PC-9 (cell line): ENCODE measurements at regions of chr2 and their contacts with region 1.

Region 1: GRCh38 chr2:58834404-58834803 is 593.3 kb upstream of the FANCL start:
- DNase-seq: peak in 1 of 2 experiments; percentile 17
- H3K4me3 ChIP-seq: no peak overlapping the region
- H3K27ac ChIP-seq: no peak overlapping the region
- H3K4me1 ChIP-seq: no peaks in the 10 kb centered on the region
- H3K27me3 ChIP-seq: no peaks in the 10 kb centered on the region
- CTCF ChIP-seq: no peak

Region 2: DNA sequence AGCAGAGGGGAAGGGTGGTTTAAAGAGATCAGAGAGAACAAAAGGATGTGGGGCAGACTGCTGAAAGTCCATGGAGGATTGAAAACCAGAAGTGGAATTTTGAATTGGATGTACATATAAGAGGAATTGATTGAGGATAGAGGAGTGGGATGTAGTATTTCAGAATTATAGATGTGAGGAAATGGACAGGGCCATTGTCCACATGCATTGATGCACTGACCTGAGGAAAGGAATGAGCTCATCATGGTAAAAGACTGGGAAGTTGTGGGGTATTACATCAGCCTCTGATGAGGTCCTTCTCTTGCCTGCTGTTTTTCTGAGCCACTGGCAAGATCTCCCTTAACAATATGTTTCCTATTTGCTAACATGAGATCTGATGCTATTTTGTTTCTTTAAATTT is 227.6 kb before region 1 on chr2:
- CTCF ChIA-PET with region 1: no interaction called
- POLR2A ChIA-PET with region 1: no interaction called
- intact Hi-C with region 1: no loop called
- DNase-seq: no peak
- H3K4me3 ChIP-seq: no peak overlapping the region
- H3K27ac ChIP-seq: no peak overlapping the region
- H3K4me1 ChIP-seq: no peaks in the 10 kb centered on the region
- H3K27me3 ChIP-seq: peaks cover 5% of the 10 kb centered on the region; the same call in 1 of the 2 replicates
- CTCF ChIP-seq: no peak

Region 3: DNA sequence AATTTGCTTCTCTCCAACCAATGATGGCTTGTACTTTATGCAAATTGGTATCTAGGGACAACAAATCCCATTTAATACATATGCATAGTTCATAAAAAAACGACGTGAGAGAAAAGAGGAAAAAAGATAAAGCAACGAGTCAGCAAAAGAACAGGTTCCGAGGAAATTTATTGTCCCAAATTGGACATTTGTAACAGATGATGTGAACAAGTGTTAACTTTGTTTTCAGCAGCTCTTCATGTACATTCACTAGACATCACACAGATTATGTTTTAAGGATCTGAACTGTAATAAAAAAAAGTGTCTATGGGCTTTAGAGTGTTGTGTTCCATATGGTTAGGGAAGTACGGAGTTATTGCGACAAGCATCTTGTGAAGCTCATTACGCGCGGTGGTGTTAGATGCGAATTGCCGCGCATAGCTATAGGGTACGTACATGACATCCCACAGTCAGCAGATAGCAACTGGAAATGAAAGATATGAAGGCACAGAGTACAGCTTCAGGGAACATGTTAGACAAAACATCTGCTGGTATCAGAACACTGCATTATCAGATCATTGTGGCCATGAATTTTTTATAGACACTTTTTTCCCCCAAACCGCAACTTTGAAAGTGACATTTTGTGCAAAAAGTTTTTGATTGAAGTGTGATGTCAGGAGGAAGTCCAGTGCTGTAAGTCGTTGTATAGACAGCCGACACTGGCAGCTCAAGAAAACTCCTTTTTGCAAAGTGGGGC is 479.8 kb after region 1 on chr2:
- CTCF ChIA-PET with region 1: no interaction called
- POLR2A ChIA-PET with region 1: interaction called, 12 read pairs
- intact Hi-C with region 1: no loop called
- DNase-seq: no peak
- H3K4me3 ChIP-seq: no peak overlapping the region
- H3K27ac ChIP-seq: no peak overlapping the region
- H3K4me1 ChIP-seq: no peaks in the 10 kb centered on the region
- H3K27me3 ChIP-seq: peaks cover 4% of the 10 kb centered on the region; the same call in 1 of the 2 replicates
- CTCF ChIP-seq: no peak